PC-9 (cell line): ENCODE measurements at regions of chr15 and their contacts with region 1.

Region 1: GRCh38 chr15:52261498-52262242 is 33.9 kb downstream of the MYO5C start:
- DNase-seq: peak; percentile 90 to 95
- H3K4me3 ChIP-seq: 0 out of 2 replicates have a peak overlapping the region, but pooled peaks have one; percentile 17
- H3K27ac ChIP-seq: peak overlapping the region; percentile 95
- H3K4me1 ChIP-seq: peaks cover 26% of the 10 kb centered on the region
- H3K27me3 ChIP-seq: no peaks in the 10 kb centered on the region
- CTCF ChIP-seq: 0 out of 2 replicates have a peak, but pooled peaks have one; percentile 26

Region 2: GRCh38 chr15:52233405-52233804 is 28.3 kb before region 1 on chr15:
- CTCF ChIA-PET with region 1: no interaction called
- POLR2A ChIA-PET with region 1: no interaction called
- intact Hi-C with region 1: no loop called
- DNase-seq: no peak
- H3K4me3 ChIP-seq: no peak overlapping the region
- H3K27ac ChIP-seq: no peak overlapping the region
- H3K4me1 ChIP-seq: no peaks in the 10 kb centered on the region
- H3K27me3 ChIP-seq: no peaks in the 10 kb centered on the region
- CTCF ChIP-seq: no peak

Region 3: GRCh38 chr15:52288051-52288942 is 26.6 kb after region 1 on chr15:
- CTCF ChIA-PET with region 1: interaction called, 8 read pairs
- POLR2A ChIA-PET with region 1: interaction called, 25 read pairs
- intact Hi-C with region 1: loop called (anchors 1 kb)
- DNase-seq: peak; percentile 90 to 93
- H3K4me3 ChIP-seq: peak overlapping the region; percentile 42; the same call in 1 of the 2 replicates
- H3K27ac ChIP-seq: peak overlapping the region; percentile 93
- H3K4me1 ChIP-seq: peaks cover 45% of the 10 kb centered on the region
- H3K27me3 ChIP-seq: no peaks in the 10 kb centered on the region
- CTCF ChIP-seq: no peak

Region 4: GRCh38 chr15:52568601-52569256 is 307.1 kb after region 1 on chr15 and contains the start of gene ARPP19:
- CTCF ChIA-PET with region 1: no interaction called
- POLR2A ChIA-PET with region 1: interaction called, 7 read pairs
- intact Hi-C with region 1: loop called (anchors 1 kb)
- DNase-seq: peak; percentile 77 to 88
- H3K4me3 ChIP-seq: peak within 1 kb of the TSS; percentile 94
- H3K27ac ChIP-seq: peak within 1 kb of the TSS; percentile 84
- H3K4me1 ChIP-seq: peaks cover 15% of the 10 kb centered on the region
- H3K27me3 ChIP-seq: no peaks in the 10 kb centered on the region
- CTCF ChIP-seq: no peak
- total RNA-seq, gene ARPP19: 108 and 119 TPM in 2 replicates